Naive thymus-derived CD4-positive, alpha-beta T cell (primary cell): ENCODE measurements at regions of chr2 and their contacts with region 1.

Region 1: GRCh38 chr2:197804049-197804757 is at the start of gene PLCL1:
- DNase-seq: peak; percentile 73 to 94 (median 91)
- ATAC-seq: peak; percentile 98
- H3K4me3 ChIP-seq: peak within 1 kb of the TSS; percentile 67
- H3K4me3 Mint-ChIP-seq: peak within 1 kb of the TSS; percentile 92 to 98 (median 96)
- H3K27ac ChIP-seq: peak within 1 kb of the TSS; percentile 89
- H3K27ac Mint-ChIP-seq: peak within 1 kb of the TSS; percentile 58 to 96 (median 92)
- H3K4me1 ChIP-seq: peaks cover 10 to 29% of the 10 kb centered on the region in 2 donors
- H3K4me1 Mint-ChIP-seq: peaks cover 33 to 55% (median 48%) of the 10 kb centered on the region in 7 donors
- H3K27me3 ChIP-seq: peaks cover 0 to 6% of the 10 kb centered on the region in 2 donors
- H3K27me3 Mint-ChIP-seq: peaks cover 0 to 49% (median 0%) of the 10 kb centered on the region in 5 donors
- total RNA-seq, gene PLCL1: 1.8 to 33.7 (median 28.5) TPM

Region 2: GRCh38 chr2:196639180-196640030 is 1164.8 kb before region 1 on chr2 and contains the start of gene CCDC150:
- CTCF ChIA-PET with region 1: no interaction called
- POLR2A ChIA-PET with region 1: no interaction called
- intact Hi-C with region 1: loop called (anchors 1 to 10 kb)
- DNase-seq: peak; percentile 88 to 95 (median 94)
- ATAC-seq: peak; percentile 100
- H3K4me3 ChIP-seq: peak within 1 kb of the TSS; percentile 86
- H3K4me3 Mint-ChIP-seq: peak within 1 kb of the TSS; percentile 82 to 92 (median 88)
- H3K27ac ChIP-seq: peak within 1 kb of the TSS; percentile 48
- H3K27ac Mint-ChIP-seq: peak within 1 kb of the TSS in 8 of 9 donors; percentile 30 to 78 (median 43)
- H3K4me1 ChIP-seq: peaks cover 7 to 8% of the 10 kb centered on the region in 2 donors
- H3K4me1 Mint-ChIP-seq: peaks cover 4 to 26% (median 19%) of the 10 kb centered on the region in 7 donors
- H3K27me3 ChIP-seq: no peaks in the 10 kb centered on the region
- H3K27me3 Mint-ChIP-seq: peaks cover 0 to 15% (median 0%) of the 10 kb centered on the region in 5 donors
- total RNA-seq, gene CCDC150: 0.13 to 11.2 (median 1.2) TPM

Region 3: GRCh38 chr2:196823750-196824522 is 980.3 kb before region 1 on chr2:
- CTCF ChIA-PET with region 1: no interaction called
- POLR2A ChIA-PET with region 1: no interaction called
- intact Hi-C with region 1: no loop called
- DNase-seq: no peak
- ATAC-seq: no peak
- H3K4me3 ChIP-seq: no peak overlapping the region
- H3K4me3 Mint-ChIP-seq: no peak overlapping the region
- H3K27ac ChIP-seq: no peak overlapping the region
- H3K27ac Mint-ChIP-seq: no peak overlapping the region
- H3K4me1 ChIP-seq: no peaks in the 10 kb centered on the region
- H3K4me1 Mint-ChIP-seq: peaks cover 0 to 18% (median 1%) of the 10 kb centered on the region in 7 donors
- H3K27me3 ChIP-seq: no peaks in the 10 kb centered on the region
- H3K27me3 Mint-ChIP-seq: peaks cover 0 to 29% (median 16%) of the 10 kb centered on the region in 5 donors

Region 4: DNA sequence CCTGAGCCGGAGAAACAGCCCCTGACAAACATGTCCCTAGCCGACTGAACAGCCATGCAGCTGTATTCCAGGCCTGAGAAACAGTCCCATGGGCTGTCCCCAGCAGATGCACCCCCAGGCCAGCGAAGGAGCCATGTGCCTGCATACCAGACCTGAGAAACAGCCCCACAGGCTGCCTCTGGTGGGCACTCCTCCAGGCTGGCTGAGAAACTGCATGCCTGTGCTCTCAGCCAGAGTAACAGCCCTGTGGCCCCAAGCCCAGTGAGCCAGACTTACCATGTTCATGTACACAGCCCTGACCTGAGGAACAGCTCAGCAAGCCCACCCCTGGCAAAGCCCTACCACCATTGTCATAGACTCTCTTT is 43.9 kb before region 1 on chr2:
- CTCF ChIA-PET with region 1: no interaction called
- POLR2A ChIA-PET with region 1: no interaction called
- intact Hi-C with region 1: no loop called
- DNase-seq: no peak
- ATAC-seq: no peak
- H3K4me3 ChIP-seq: no peak overlapping the region
- H3K4me3 Mint-ChIP-seq: no peak overlapping the region
- H3K27ac ChIP-seq: no peak overlapping the region
- H3K27ac Mint-ChIP-seq: no peak overlapping the region
- H3K4me1 ChIP-seq: no peaks in the 10 kb centered on the region
- H3K4me1 Mint-ChIP-seq: no peaks in the 10 kb centered on the region
- H3K27me3 ChIP-seq: no peaks in the 10 kb centered on the region
- H3K27me3 Mint-ChIP-seq: peaks cover 0 to 31% (median 15%) of the 10 kb centered on the region in 5 donors

Region 5: DNA sequence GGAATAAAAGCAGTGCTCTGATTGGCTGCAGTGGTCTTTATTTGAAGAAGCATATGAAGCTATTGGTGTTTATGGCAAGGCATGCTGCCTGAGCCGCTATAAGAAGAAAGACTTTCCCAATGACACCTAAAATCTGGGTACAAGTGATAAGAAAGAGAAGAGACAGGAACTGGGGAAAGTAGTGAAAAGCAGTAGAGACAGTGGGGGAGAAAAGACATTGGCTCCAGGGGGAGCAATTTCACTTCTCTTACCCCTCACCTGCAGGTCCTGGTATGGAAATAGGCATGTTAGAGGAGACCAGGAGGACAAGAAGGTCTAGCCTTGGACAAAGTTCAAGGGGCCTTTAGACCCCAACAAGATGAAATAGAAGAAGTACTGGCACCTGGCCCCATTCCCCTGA is 47.2 kb after region 1 on chr2:
- CTCF ChIA-PET with region 1: interaction called, 7 read pairs
- POLR2A ChIA-PET with region 1: interaction called, 9 read pairs
- intact Hi-C with region 1: loop called (anchors 1 kb)
- DNase-seq: no peak
- ATAC-seq: no peak
- H3K4me3 ChIP-seq: no peak overlapping the region
- H3K4me3 Mint-ChIP-seq: peak overlapping the region in 7 of 10 donors; percentile 3 to 80 (median 29)
- H3K27ac ChIP-seq: no peak overlapping the region
- H3K27ac Mint-ChIP-seq: peak overlapping the region in 8 of 9 donors; percentile 60 to 100 (median 98)
- H3K4me1 ChIP-seq: peaks cover 4 to 76% of the 10 kb centered on the region in 2 donors
- H3K4me1 Mint-ChIP-seq: peaks cover 29 to 100% (median 93%) of the 10 kb centered on the region in 7 donors
- H3K27me3 ChIP-seq: no peaks in the 10 kb centered on the region
- H3K27me3 Mint-ChIP-seq: no peaks in the 10 kb centered on the region

Region 6: GRCh38 chr2:197931661-197932312 is 127.6 kb after region 1 on chr2:
- CTCF ChIA-PET with region 1: no interaction called
- POLR2A ChIA-PET with region 1: no interaction called
- intact Hi-C with region 1: loop called in 1 of 2 experiments (anchors 1 kb)
- DNase-seq: no peak
- ATAC-seq: no peak
- H3K4me3 ChIP-seq: no peak overlapping the region
- H3K4me3 Mint-ChIP-seq: no peak overlapping the region
- H3K27ac ChIP-seq: no peak overlapping the region
- H3K27ac Mint-ChIP-seq: peak overlapping the region in 1 of 9 donors; percentile 49
- H3K4me1 ChIP-seq: peaks cover 0 to 16% of the 10 kb centered on the region in 2 donors
- H3K4me1 Mint-ChIP-seq: peaks cover 21 to 89% (median 76%) of the 10 kb centered on the region in 7 donors
- H3K27me3 ChIP-seq: no peaks in the 10 kb centered on the region
- H3K27me3 Mint-ChIP-seq: peaks cover 0 to 1% (median 0%) of the 10 kb centered on the region in 5 donors

Region 7: DNA sequence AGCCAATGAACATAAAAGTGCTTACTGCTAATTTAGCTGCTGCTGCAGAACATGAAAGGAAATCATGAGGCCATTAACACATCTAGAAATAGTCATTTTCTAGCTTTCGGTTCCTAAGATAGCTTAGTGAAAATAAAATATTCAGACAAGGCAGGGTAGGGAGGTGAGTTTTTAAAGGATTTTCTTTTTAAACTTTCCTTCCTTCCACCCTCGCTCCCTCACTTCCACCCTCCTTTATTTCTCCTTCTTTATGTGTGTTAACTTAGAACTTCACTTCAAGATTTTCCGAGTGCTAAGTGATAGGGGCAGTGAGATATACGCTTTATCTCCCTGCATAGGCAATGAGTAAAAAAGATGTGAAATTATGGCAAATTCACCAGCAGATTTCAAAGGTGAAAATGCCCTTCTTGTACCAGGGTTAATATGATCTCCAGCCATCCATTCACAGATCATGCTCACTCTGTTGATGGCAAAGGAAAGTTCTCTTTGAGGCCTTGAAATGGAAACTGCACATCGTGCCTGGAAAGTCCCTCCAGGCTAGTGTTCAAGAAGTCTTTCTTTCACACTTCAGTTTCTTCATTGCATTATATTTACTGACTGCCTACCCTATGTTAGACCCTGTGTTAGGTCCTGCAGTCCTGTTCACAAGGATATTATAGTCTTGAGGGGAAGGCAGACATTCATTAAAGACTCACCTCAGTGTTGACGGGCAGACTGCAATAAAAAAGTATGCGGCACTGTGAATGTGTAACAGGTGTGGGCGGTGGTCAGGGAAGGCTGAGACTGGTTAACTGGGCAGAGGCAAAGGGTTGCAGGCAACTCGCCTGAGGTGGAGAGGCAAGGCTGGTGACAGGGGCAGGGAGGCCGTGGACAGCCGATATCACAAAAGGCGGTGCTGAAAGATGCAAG is 201.0 kb after region 1 on chr2:
- CTCF ChIA-PET with region 1: no interaction called
- POLR2A ChIA-PET with region 1: interaction called, 3 read pairs
- intact Hi-C with region 1: loop called in 1 of 2 experiments (anchors 2 kb)
- DNase-seq: peak in 5 of 9 donors; percentile 8 to 49 (median 28)
- ATAC-seq: peak; percentile 80
- H3K4me3 ChIP-seq: no peak overlapping the region
- H3K4me3 Mint-ChIP-seq: peak overlapping the region in 8 of 10 donors; percentile 29 to 75 (median 63)
- H3K27ac ChIP-seq: no peak overlapping the region
- H3K27ac Mint-ChIP-seq: peak overlapping the region; percentile 37 to 88 (median 69)
- H3K4me1 ChIP-seq: no peaks in the 10 kb centered on the region
- H3K4me1 Mint-ChIP-seq: peaks cover 12 to 77% (median 60%) of the 10 kb centered on the region in 7 donors
- H3K27me3 ChIP-seq: no peaks in the 10 kb centered on the region
- H3K27me3 Mint-ChIP-seq: no peaks in the 10 kb centered on the region

Region 8: GRCh38 chr2:198296665-198297308 is 492.6 kb after region 1 on chr2:
- CTCF ChIA-PET with region 1: interaction called, 32 read pairs
- POLR2A ChIA-PET with region 1: interaction called, 10 read pairs
- intact Hi-C with region 1: loop called (anchors 1 kb)
- DNase-seq: peak; percentile 11 to 67 (median 54)
- ATAC-seq: peak; percentile 84
- H3K4me3 ChIP-seq: no peak overlapping the region
- H3K4me3 Mint-ChIP-seq: peak overlapping the region in 1 of 10 donors; percentile 8
- H3K27ac ChIP-seq: no peak overlapping the region
- H3K27ac Mint-ChIP-seq: peak overlapping the region in 1 of 9 donors; percentile 41
- H3K4me1 ChIP-seq: no peaks in the 10 kb centered on the region
- H3K4me1 Mint-ChIP-seq: peaks cover 0 to 5% (median 0%) of the 10 kb centered on the region in 7 donors
- H3K27me3 ChIP-seq: no peaks in the 10 kb centered on the region
- H3K27me3 Mint-ChIP-seq: peaks cover 7 to 19% (median 8%) of the 10 kb centered on the region in 5 donors